Activated B cell treated with CpG ODN at 0.5 μM for 24 hours (primary cell): ENCODE measurements at regions of chr6 and their contacts with region 1.

Region 1: GRCh38 chr6:162360901-162361567 is 366.5 kb downstream of the PRKN start:
- DNase-seq: no peak
- ATAC-seq: no peak
- H3K4me3 Mint-ChIP-seq: no peak overlapping the region
- H3K27ac Mint-ChIP-seq: no peak overlapping the region
- H3K4me1 Mint-ChIP-seq: no peaks in the 10 kb centered on the region
- H3K27me3 Mint-ChIP-seq: no peaks in the 10 kb centered on the region
- CTCF ChIP-seq: no peak

Region 2: DNA sequence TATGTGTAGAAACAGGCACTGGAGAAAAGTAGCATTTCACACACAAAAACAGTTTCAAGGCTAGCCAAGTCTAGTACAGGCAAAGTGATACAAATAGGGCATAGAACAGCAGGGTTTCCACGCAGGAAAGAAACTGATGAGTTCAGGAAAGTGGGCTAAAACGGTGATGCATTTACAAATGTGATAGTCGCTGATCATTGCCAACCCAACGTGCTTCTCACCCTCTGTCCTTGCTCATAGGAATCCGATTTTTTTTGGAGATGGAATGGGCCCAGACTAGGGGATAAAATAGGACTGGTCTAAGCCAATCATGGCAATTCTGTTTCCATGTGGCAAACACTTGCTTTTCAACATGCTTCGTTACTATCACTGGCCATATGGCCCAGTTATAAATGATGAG is 170.1 kb before region 1 on chr6:
- CTCF ChIA-PET with region 1: no interaction called
- POLR2A ChIA-PET with region 1: no interaction called
- intact Hi-C with region 1: no loop called
- DNase-seq: no peak
- ATAC-seq: no peak
- H3K4me3 Mint-ChIP-seq: no peak overlapping the region
- H3K27ac Mint-ChIP-seq: no peak overlapping the region
- H3K4me1 Mint-ChIP-seq: no peaks in the 10 kb centered on the region
- H3K27me3 Mint-ChIP-seq: no peaks in the 10 kb centered on the region
- CTCF ChIP-seq: no peak

Region 3: DNA sequence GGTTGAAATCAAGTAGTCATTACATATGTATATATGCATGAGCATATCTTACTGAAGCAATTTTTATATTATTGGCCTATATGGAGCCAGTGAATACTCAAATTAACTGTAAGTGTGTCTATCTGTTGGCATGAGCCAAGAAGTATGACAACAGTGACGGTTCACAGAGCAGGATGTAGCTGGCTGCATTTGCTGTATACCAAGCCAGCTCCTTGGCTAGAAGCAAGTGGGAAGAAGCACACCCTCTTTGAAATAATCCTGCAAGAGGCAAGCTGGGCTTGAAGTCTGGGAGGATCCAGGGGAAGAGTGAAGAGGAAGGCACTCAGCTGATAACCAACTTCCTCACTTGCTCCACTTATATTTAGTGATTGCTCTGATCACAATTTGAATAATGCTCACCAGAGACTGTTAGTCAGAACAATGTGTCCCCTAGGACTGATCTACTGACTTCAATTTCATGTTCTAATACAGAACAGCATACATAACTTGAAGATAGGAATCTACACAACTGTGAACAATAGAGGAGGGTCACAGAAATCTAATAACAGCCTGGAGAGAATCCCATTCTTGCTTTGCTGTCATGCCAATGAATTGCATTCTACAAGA is 130.8 kb before region 1 on chr6:
- CTCF ChIA-PET with region 1: no interaction called
- POLR2A ChIA-PET with region 1: no interaction called
- intact Hi-C with region 1: no loop called
- DNase-seq: no peak
- ATAC-seq: no peak
- H3K4me3 Mint-ChIP-seq: no peak overlapping the region
- H3K27ac Mint-ChIP-seq: no peak overlapping the region
- H3K4me1 Mint-ChIP-seq: no peaks in the 10 kb centered on the region
- H3K27me3 Mint-ChIP-seq: no peaks in the 10 kb centered on the region
- CTCF ChIP-seq: no peak

Region 4: DNA sequence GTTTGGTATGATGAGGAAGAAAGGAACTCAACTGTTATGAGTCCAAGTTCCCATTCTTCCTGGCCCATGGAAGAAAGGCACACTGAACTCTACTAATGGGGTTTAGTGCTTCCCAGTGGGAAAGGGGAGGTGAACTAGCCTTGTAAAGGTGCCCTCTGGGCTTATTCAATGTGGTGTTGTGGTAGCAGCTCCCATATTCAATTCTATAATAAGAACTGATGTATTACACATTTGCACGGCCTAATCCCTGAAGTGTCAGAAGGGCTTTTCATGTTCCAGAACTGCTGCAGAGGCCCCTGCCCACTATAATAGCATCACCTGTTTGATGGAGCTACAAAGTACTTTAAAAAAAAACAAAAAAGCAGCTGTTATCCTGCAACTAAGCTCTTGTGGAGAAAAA is 349.4 kb after region 1 on chr6:
- CTCF ChIA-PET with region 1: no interaction called
- POLR2A ChIA-PET with region 1: interaction called, 10 read pairs
- intact Hi-C with region 1: no loop called
- DNase-seq: no peak
- ATAC-seq: no peak
- H3K4me3 Mint-ChIP-seq: no peak overlapping the region
- H3K27ac Mint-ChIP-seq: no peak overlapping the region
- H3K4me1 Mint-ChIP-seq: peaks cover 6% of the 10 kb centered on the region
- H3K27me3 Mint-ChIP-seq: no peaks in the 10 kb centered on the region
- CTCF ChIP-seq: no peak